GM23248 (cell line): ENCODE measurements at regions of chr17 and their contacts with region 1.

Region 1: DNA sequence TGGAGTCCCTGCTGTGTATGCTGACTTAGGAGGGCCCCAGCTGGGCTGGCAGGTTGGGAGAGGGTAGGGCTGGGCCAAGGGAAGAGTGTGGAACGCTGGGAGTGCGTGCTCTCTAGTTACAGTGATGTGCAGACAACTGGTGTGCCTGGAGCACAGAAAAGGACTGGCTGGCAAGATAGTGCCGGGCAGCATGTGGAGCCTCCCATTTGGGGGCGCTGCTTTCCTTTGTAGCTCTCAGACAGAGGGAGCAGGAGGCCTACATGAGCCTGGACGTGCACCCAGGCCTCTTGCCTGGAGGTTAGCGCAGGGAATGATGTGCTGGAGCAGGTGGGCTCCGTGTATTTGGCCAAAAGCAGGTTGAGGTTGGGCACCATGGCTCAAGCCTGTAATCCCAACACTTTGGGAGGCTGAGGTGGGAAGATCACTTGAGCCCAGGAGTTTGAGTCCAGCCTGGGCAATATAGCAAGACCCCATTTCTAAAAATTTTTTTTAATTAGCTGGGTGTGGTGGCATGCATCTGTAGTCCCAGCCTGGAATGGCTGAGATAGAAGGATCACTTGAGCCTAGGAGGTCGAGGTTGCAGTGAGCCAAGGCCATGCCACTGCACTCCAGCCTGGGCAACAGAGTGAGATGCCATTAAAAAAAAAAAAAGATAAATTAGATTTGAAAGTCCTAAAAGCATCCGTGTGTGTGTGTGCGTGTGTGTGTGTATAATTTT is 26.1 kb upstream of the TBX4 start:
- DNase-seq: no peak
- H3K4me3 ChIP-seq: no peak overlapping the region
- H3K27ac ChIP-seq: no peak overlapping the region
- H3K4me1 ChIP-seq: peaks cover 11% of the 10 kb centered on the region; the same call in 1 of the 2 replicates
- H3K27me3 ChIP-seq: peaks cover 18% of the 10 kb centered on the region

Region 2: DNA sequence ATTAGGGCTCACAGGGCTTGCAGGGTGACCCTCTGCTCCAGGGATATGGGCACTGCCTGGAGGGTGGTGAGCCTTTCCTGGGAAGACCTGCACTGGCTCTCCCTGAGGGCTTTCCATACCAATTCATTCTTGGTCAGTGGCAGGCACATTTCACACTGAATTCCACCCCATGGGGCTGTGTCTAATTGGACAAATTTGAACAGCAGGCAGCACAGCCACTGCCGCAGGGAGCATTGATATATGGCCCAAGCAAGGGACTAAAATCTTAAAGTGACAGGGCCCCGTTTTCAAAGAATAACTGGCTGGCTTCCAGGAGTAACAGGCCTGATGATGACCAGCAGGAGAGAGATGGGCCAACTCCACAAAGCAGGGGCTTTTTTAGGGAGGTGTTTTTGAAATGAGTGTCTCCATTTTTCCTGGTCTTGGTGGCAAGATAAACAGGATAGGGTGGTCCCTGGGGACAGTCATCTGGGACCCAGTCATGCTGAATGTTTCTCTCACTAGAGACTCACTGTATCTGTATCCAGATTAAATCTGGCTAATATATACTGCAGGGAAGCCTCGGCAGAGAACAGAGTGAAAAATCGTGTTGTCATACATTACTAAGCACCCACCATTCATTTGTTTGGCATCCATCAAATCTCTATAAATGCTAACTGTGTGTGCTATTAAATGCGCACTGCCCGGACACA is 100.6 kb before region 1 on chr17:
- in situ Hi-C with region 1: no loop called
- DNase-seq: peak; percentile 91
- H3K4me3 ChIP-seq: no peak overlapping the region
- H3K27ac ChIP-seq: peak overlapping the region; percentile 58
- H3K4me1 ChIP-seq: peaks cover 23% of the 10 kb centered on the region
- H3K27me3 ChIP-seq: no peaks in the 10 kb centered on the region

Region 3: DNA sequence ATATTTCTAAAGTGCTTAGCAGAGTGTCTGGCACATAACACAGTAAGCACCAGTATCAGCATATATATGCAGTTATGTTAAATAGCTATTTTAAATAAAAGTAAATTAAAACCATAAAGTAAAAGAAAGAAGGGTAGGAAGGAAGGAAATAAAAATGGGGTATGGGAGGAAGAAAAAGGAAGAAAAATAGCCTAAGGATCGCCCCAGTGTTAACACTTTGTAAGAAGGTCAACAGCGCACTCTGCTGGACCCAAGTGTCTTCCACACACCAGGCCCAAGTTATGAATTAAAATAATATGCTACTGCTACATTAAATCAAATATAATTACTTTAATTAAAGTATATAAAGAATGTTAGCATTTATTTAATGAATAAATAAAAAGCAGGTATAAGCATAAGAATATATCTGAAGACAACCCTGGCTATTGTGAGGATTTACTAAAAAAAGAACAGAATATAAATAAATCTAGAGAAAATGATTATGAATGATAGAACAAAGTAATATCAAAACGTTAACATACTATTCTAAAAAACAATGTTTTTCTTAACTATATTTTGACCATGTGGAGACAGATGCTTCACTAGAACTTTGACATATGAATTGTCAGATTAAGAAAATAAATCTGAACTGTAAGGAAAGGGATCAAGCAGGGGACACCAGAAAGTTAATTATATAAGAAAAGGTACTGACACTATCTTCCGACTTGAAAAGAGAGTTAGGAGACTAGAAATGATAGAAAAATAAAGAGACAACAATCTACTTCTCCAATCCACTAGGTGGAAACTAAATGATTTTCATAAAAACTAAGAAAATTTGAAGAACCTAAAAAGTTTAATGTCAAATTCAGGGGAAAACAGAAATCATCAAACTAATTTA is 411.2 kb after region 1 on chr17:
- in situ Hi-C with region 1: loop called (anchors 25 kb)
- DNase-seq: peak; percentile 86
- H3K4me3 ChIP-seq: no peak overlapping the region
- H3K27ac ChIP-seq: no peak overlapping the region
- H3K4me1 ChIP-seq: peaks cover 16% of the 10 kb centered on the region; the same call in 1 of the 2 replicates
- H3K27me3 ChIP-seq: no peaks in the 10 kb centered on the region

Region 4: DNA sequence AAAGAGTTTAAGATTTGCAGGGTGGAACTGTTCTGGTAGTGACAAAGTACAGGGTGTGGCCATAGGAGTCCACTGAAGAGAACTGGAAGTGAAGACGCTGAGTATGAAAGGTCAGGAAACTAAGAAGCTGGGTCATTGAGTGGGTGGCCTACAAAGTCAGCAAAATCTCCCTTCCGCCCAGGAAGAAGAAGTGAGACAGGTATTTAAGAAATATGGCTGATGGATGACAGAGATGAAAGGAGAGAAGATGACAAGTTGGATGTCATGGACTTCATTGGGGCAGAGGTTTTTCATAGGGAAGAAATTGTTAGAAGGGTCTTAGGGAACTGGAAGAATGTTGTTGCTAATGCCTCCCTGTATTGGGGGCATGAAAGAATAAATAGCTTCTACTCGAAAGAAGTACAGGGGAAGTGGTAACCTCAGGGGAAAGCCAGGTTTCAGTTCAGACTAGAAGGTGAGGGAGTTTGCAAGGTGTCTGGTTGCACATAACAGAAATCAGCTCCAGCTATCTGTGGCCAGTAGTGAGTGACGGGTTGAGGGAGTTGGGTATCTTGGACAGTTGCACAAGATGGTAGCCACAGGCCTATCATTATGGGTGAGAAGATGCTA is 672.6 kb after region 1 on chr17:
- in situ Hi-C with region 1: no loop called
- DNase-seq: no peak
- H3K4me3 ChIP-seq: no peak overlapping the region
- H3K27ac ChIP-seq: no peak overlapping the region
- H3K4me1 ChIP-seq: peaks cover 22% of the 10 kb centered on the region
- H3K27me3 ChIP-seq: peaks cover 8% of the 10 kb centered on the region; the same call in 1 of the 2 replicates